ENCODE measurements at regions of chr22 and their contacts with region 1.

Region 1: DNA sequence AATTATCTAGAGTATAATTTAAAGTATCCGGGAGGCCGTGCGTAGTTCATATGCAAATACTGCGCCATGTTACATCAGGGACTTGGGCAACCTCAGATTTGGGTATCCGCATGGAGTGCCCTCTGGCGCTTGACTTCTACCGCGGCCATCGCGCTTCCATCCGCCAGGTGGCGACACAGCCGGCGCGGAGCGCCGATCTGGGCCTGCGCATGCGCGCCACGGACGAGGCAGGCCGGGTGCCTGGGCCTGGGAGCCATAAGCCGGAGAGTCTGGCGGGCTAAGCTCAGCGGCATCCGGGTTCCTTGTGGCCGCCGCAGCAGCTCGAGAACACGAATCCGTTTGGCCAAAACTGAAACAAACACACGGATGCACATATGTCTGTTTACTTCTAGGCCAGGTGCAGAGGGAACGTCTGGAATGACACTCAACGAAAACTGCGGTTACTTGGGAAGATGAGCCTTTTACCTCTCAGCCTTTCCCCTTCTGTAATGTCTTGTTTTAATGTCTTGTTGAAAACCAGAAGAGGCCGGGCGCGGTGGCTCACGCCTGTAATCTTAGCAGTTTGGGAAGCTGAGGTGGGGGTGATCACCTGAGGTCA is 21.9 kb downstream of the SNU13 start:
- DNase-seq: peak; percentile 85
- ATAC-seq: peak; percentile 68
- H3K4me3 ChIP-seq: peak overlapping the region; percentile 60; the same call in 1 of the 2 replicates
- H3K27ac ChIP-seq: peak overlapping the region; percentile 89
- H3K4me1 ChIP-seq: peaks cover 29% of the 10 kb centered on the region
- H3K27me3 ChIP-seq: no peaks in the 10 kb centered on the region
- CTCF ChIP-seq: peak; percentile 93

Region 2: GRCh38 chr22:41517172-41518047 is 149.3 kb before region 1 on chr22:
- CTCF ChIA-PET with region 1: no interaction called
- POLR2A ChIA-PET with region 1: no interaction called
- intact Hi-C with region 1: no loop called
- DNase-seq: peak; percentile 70
- ATAC-seq: peak; percentile 52
- H3K4me3 ChIP-seq: no peak overlapping the region
- H3K27ac ChIP-seq: peak overlapping the region; percentile 22
- H3K4me1 ChIP-seq: peaks cover 20% of the 10 kb centered on the region
- H3K27me3 ChIP-seq: no peaks in the 10 kb centered on the region
- CTCF ChIP-seq: peak; percentile 76

Region 3: DNA sequence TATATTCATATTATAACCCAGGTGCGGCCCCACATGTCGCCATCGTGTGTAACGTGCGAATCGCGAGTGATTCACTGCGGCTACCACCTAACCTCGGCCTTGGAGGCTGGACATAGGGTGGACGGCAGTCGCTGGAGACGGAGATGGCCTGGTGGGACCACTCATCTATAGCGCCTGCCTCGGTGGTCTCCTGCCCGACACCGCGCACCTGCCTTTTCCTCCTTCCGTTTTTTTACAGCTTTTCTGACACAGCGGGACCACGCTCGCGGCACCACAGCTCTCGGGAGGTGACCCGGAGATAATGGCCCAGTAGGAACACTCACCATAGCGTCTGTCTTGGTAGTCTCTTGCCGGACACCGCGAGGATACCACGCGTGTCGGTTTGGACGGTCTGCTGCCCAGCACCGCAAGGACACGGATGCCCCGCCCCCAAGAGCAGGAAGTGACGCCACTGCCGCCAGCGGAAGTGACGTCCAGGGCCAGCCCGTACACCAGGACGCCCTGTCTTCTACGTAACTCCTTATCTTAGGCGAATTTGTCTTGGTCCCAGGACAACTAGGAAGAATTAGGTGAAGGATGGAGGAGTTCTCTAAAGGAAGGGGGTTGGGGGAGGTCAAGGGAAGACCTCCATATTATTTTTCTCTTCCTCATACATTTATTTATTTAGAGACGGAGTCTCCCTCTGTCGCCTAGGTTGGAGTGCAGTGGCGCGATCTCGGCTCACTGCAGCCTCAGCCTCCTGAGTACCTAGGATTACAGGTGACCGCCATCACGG is 15.5 kb after region 1 on chr22:
- CTCF ChIA-PET with region 1: no interaction called
- POLR2A ChIA-PET with region 1: interaction called, 3 read pairs
- intact Hi-C with region 1: loop called (anchors 2 kb)
- DNase-seq: peak; percentile 85
- ATAC-seq: peak; percentile 97
- H3K4me3 ChIP-seq: peak overlapping the region; percentile 82
- H3K27ac ChIP-seq: peak overlapping the region; percentile 69
- H3K4me1 ChIP-seq: peaks cover 15% of the 10 kb centered on the region; the same call in 1 of the 2 replicates
- H3K27me3 ChIP-seq: no peaks in the 10 kb centered on the region
- CTCF ChIP-seq: no peak